ENCODE measurements at regions of chr17 and their contacts with region 1.

Region 1: GRCh38 chr17:45247429-45248131 is 14.3 kb downstream of the SPATA32 start:
- DNase-seq: peak; percentile 99
- H3K4me3 Mint-ChIP-seq: peak overlapping the region; percentile 87
- H3K27ac Mint-ChIP-seq: peak overlapping the region; percentile 93
- H3K4me1 Mint-ChIP-seq: peaks cover 68% of the 10 kb centered on the region
- H3K27me3 Mint-ChIP-seq: peaks cover 5% of the 10 kb centered on the region

Region 2: GRCh38 chr17:45235416-45236281 is 11.9 kb before region 1 on chr17:
- CTCF ChIA-PET with region 1: interaction called, 19 read pairs
- DNase-seq: peak; percentile 86
- H3K4me3 Mint-ChIP-seq: no peak overlapping the region
- H3K27ac Mint-ChIP-seq: peak overlapping the region; percentile 84
- H3K4me1 Mint-ChIP-seq: peaks cover 52% of the 10 kb centered on the region
- H3K27me3 Mint-ChIP-seq: no peaks in the 10 kb centered on the region

Region 3: DNA sequence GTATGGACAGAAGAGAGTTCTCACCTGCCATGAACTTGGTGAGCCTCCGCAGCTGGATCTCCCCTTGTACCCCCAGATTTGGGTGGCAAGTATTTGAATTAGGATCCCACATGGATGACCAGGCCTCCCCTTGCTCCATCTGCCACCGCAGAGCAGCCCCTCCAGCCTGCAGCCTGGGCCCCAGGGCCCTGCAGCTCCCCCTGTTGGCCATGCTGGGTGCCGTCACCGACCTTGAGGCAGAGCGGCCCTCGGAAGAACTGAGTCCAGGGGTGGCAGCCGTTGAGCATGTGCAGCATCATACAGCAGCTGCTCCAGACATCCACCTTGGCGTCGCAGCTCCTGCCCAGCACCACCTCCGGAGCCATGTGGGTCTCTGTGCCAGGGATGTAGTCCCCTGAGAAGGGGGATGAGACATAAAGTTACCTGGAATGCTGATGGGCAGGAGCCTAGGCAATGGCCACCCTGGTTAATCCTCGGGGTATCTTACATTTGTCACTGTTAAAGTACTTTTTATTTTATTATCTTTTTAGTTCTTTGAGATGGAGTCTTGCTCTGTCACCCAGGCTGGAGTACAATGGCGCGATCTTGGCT is 23.3 kb after region 1 on chr17:
- CTCF ChIA-PET with region 1: interaction called, 14 read pairs
- DNase-seq: peak; percentile 71
- H3K4me3 Mint-ChIP-seq: no peak overlapping the region
- H3K27ac Mint-ChIP-seq: peak overlapping the region; percentile 37
- H3K4me1 Mint-ChIP-seq: no peaks in the 10 kb centered on the region
- H3K27me3 Mint-ChIP-seq: no peaks in the 10 kb centered on the region

Measured in activated naive CD4-positive, alpha-beta T cell treated with anti-CD3 and anti-CD28 coated beads, Interleukin-2, amount 10 ng/mL, durations not matched to agents 7 days and 5 days (primary cell).